MCF 10A (cell line): ENCODE measurements at regions of chrX and their contacts with region 1.

Region 1: DNA sequence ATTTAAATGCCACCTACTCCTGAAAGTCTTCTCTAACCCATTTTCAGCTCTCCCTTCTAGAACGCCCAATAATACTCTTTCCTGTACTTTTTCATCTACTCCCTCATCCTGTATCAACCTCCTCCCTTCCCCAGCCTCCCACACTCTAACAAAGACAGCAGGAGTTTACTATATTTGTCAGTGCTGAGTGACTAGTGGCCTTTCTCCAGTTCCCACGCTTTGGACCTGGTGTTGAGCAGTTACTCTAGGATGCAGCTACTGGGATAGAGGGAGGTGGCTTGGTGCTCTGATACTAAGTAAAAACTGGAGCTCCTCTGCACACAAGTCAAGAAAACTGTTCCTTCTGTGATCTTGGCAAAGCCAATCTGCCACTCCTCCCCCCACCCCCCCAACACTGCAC is 36.1 kb upstream of the KLHL13 start:
- DNase-seq: no peak
- H3K4me3 Mint-ChIP-seq: no peak overlapping the region
- H3K27ac Mint-ChIP-seq: no peak overlapping the region
- H3K4me1 Mint-ChIP-seq: no peaks in the 10 kb centered on the region
- H3K27me3 Mint-ChIP-seq: peaks cover 43% of the 10 kb centered on the region
- CTCF ChIP-seq: no peak

Region 2: DNA sequence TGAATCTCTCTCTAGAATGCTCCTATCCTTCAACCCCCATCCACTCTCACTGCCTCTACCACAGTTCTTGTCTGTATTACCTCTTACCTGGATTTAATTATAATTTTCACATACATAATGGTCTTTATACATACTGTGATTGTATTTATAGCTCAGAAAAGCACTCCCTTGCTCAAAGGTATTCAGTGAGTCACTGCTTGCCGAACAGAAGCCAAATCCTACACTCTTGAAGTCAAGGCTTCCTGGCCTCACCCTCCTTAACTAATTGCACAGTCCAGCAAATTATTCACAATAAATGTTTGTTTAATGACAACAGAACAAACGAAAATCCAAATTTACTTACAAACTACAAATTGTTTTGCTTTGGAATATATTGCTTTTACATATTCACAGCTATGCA is 195.6 kb before region 1 on chrX:
- CTCF ChIA-PET with region 1: no interaction called
- POLR2A ChIA-PET with region 1: no interaction called
- intact Hi-C with region 1: no loop called
- DNase-seq: peak; percentile 51
- H3K4me3 Mint-ChIP-seq: no peak overlapping the region
- H3K27ac Mint-ChIP-seq: no peak overlapping the region
- H3K4me1 Mint-ChIP-seq: peaks cover 5% of the 10 kb centered on the region
- H3K27me3 Mint-ChIP-seq: peaks cover 10% of the 10 kb centered on the region
- CTCF ChIP-seq: no peak

Region 3: GRCh38 chrX:118088084-118088483 is 64.6 kb before region 1 on chrX:
- CTCF ChIA-PET with region 1: no interaction called
- POLR2A ChIA-PET with region 1: no interaction called
- intact Hi-C with region 1: loop called (anchors 2 kb)
- DNase-seq: no peak
- H3K4me3 Mint-ChIP-seq: no peak overlapping the region
- H3K27ac Mint-ChIP-seq: no peak overlapping the region
- H3K4me1 Mint-ChIP-seq: no peaks in the 10 kb centered on the region
- H3K27me3 Mint-ChIP-seq: no peaks in the 10 kb centered on the region
- CTCF ChIP-seq: no peak

Region 4: GRCh38 chrX:118698516-118699170 is 545.9 kb after region 1 on chrX:
- CTCF ChIA-PET with region 1: no interaction called
- POLR2A ChIA-PET with region 1: no interaction called
- intact Hi-C with region 1: no loop called
- DNase-seq: no peak
- H3K4me3 Mint-ChIP-seq: no peak overlapping the region
- H3K27ac Mint-ChIP-seq: no peak overlapping the region
- H3K4me1 Mint-ChIP-seq: peaks cover 8% of the 10 kb centered on the region
- H3K27me3 Mint-ChIP-seq: no peaks in the 10 kb centered on the region
- CTCF ChIP-seq: no peak